Panc1 (cell line): ENCODE measurements at regions of chr1 and their contacts with region 1.

Region 1: DNA sequence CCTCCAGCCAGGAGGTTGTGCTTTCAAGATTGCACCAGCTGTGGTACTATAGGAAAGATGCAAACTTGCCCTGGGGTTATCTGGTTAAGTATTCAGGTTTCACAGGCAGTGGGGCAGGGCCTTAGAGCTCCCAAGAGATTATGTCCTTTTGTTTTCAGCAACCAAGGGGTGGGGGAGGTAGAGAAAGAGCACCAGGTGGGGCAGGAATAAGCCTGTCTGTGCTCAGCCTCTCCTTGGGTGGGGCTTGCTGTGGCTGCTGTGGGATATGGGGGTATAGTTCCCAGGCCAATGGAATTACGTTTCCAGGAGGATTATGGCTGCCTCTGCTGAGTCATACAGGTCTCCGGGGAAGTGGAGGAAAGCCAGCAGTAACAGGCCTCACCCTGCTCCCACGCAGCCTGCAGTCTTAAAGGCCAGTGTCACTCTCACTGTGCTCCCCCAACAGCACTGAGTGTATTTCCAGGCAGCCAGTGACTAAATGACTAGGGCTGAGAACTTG is 508.6 kb downstream of the RWDD3 start:
- DNase-seq: no peak
- ATAC-seq: no peak
- H3K4me3 ChIP-seq: no peak overlapping the region
- H3K27ac ChIP-seq: no peak overlapping the region
- H3K4me1 ChIP-seq: no peaks in the 10 kb centered on the region
- H3K27me3 ChIP-seq: no peaks in the 10 kb centered on the region
- CTCF ChIP-seq: no peak

Region 2: DNA sequence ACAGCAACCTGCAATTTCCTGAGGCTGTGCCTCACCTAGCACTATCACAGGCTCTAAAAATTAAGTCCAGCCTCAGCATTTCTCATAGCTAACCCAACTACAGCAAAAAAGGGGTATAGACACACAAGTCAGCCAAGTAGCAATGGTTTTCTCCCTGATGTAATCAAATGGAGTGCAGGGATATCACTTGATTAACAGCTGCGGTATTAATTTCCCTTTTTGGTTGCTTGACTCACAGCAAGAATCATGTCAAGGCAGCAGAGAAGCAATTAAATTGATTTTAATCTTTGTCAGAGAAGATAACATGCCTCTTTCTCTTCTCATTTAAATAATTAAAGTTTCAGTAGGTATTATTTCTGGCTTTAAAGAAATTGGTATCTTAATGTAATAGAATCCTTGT is 229.7 kb before region 1 on chr1:
- CTCF ChIA-PET with region 1: no interaction called
- POLR2A ChIA-PET with region 1: no interaction called
- in situ Hi-C with region 1: no loop called
- intact Hi-C with region 1: no loop called
- DNase-seq: no peak
- ATAC-seq: no peak
- H3K4me3 ChIP-seq: no peak overlapping the region
- H3K27ac ChIP-seq: no peak overlapping the region
- H3K4me1 ChIP-seq: no peaks in the 10 kb centered on the region
- H3K27me3 ChIP-seq: no peaks in the 10 kb centered on the region
- CTCF ChIP-seq: no peak

Region 3: GRCh38 chr1:95668165-95668564 is 74.5 kb before region 1 on chr1:
- CTCF ChIA-PET with region 1: no interaction called
- POLR2A ChIA-PET with region 1: no interaction called
- in situ Hi-C with region 1: no loop called
- intact Hi-C with region 1: no loop called
- DNase-seq: no peak
- ATAC-seq: no peak
- H3K4me3 ChIP-seq: no peak overlapping the region
- H3K27ac ChIP-seq: no peak overlapping the region
- H3K4me1 ChIP-seq: no peaks in the 10 kb centered on the region
- H3K27me3 ChIP-seq: no peaks in the 10 kb centered on the region
- CTCF ChIP-seq: no peak

Region 4: GRCh38 chr1:95679262-95679661 is 63.4 kb before region 1 on chr1:
- CTCF ChIA-PET with region 1: no interaction called
- POLR2A ChIA-PET with region 1: no interaction called
- in situ Hi-C with region 1: no loop called
- intact Hi-C with region 1: loop called (anchors 2 kb)
- DNase-seq: no peak
- ATAC-seq: no peak
- H3K4me3 ChIP-seq: no peak overlapping the region
- H3K27ac ChIP-seq: no peak overlapping the region
- H3K4me1 ChIP-seq: no peaks in the 10 kb centered on the region
- H3K27me3 ChIP-seq: no peaks in the 10 kb centered on the region
- CTCF ChIP-seq: no peak